GM12878 (cell line): ENCODE measurements at regions of chr1 and their contacts with region 1.

Region 1: GRCh38 chr1:99808391-99809115 is 41.6 kb upstream of the AGL start:
- DNase-seq: peak; percentile 79
- ATAC-seq: peak; percentile 96
- H3K4me3 ChIP-seq: no peak overlapping the region
- H3K27ac ChIP-seq: peak overlapping the region; percentile 67
- H3K4me1 ChIP-seq: peaks cover 10% of the 10 kb centered on the region
- H3K27me3 ChIP-seq: no peaks in the 10 kb centered on the region
- CTCF ChIP-seq: peak; percentile 24 to 72 (median 55); a peak in 5 of 6 replicates
- EP300 ChIP-seq: no peak
- POLR2A ChIP-seq: no peak
- RAD21 ChIP-seq: peak; percentile 85

Region 2: DNA sequence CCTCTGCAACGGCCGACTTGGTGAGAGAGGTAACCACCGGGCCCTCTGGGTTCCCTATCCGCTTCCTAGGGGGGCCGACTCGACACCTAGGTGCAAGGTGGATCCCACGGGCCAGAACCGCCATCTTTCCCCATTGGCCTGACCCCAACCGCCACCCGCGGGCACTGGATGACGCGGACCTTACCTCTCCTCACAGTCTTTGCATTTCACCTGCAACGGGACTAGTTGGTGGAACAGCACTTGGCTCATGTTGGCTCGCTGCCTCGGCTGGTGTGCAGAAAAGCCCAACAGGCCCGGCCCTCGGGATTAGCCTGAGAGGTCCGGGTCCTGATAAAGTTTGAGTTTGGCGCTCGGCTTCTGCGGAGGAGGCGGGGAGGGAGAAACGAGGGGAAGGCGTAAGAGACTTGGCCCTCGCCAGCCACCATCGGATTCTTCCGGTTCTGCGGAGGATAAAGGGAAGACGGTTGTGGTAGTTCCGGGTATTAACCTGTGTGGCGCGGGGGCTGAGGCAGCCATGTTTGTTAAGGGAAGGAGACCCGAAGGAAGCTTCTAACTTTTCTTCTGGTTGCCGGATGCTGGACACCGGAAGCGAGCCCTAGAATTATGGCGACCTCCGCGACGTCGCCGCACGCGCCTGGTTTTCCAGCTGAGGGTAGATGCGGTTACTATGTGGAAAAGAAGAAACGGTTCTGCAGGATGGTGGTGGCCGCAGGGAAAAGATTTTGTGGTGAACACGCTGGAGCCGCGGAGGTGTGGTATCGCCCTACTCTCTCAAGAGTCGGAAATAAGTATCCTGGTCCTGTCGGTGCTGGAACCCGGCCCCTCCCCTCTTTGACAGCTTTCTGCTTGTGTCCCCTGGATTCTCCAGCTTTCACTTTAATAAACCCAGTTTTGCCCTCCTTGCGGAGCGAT is 324.3 kb after region 1 on chr1 and contains the starts of genes SASS6 and TRMT13:
- CTCF ChIA-PET with region 1: interaction called, 3 read pairs
- POLR2A ChIA-PET with region 1: no interaction called
- RAD21 ChIA-PET with region 1: interaction called, 4 read pairs
- SMC1A ChIA-PET with region 1: interaction called, 4 read pairs
- in situ Hi-C with region 1: no loop called
- intact Hi-C with region 1: loop called (anchors 2 kb)
- DNase-seq: peak; percentile 90
- ATAC-seq: peak; percentile 91
- H3K4me3 ChIP-seq: peak within 1 kb of the TSS; percentile 99
- H3K27ac ChIP-seq: peak within 1 kb of the TSS; percentile 83
- H3K4me1 ChIP-seq: peaks cover 11% of the 10 kb centered on the region
- H3K27me3 ChIP-seq: no peaks in the 10 kb centered on the region
- CTCF ChIP-seq: no peak
- EP300 ChIP-seq: peak in 1 of 2 experiments; percentile 43; a peak in 1 of 4 replicates
- POLR2A ChIP-seq: peak; percentile 80
- RAD21 ChIP-seq: no peak
- polyA plus RNA-seq, gene SASS6: 8.2 to 10.7 TPM
- polyA plus RNA-seq, gene TRMT13: 17.1 to 22.3 TPM

Region 3: GRCh38 chr1:100239961-100240360 is 431.4 kb after region 1 on chr1:
- CTCF ChIA-PET with region 1: no interaction called
- POLR2A ChIA-PET with region 1: no interaction called
- RAD21 ChIA-PET with region 1: no interaction called
- SMC1A ChIA-PET with region 1: no interaction called
- in situ Hi-C with region 1: no loop called
- intact Hi-C with region 1: no loop called
- DNase-seq: no peak
- ATAC-seq: no peak
- H3K4me3 ChIP-seq: no peak overlapping the region
- H3K27ac ChIP-seq: no peak overlapping the region
- H3K4me1 ChIP-seq: no peaks in the 10 kb centered on the region
- H3K27me3 ChIP-seq: no peaks in the 10 kb centered on the region
- CTCF ChIP-seq: no peak
- EP300 ChIP-seq: no peak
- POLR2A ChIP-seq: no peak
- RAD21 ChIP-seq: no peak

Region 4: DNA sequence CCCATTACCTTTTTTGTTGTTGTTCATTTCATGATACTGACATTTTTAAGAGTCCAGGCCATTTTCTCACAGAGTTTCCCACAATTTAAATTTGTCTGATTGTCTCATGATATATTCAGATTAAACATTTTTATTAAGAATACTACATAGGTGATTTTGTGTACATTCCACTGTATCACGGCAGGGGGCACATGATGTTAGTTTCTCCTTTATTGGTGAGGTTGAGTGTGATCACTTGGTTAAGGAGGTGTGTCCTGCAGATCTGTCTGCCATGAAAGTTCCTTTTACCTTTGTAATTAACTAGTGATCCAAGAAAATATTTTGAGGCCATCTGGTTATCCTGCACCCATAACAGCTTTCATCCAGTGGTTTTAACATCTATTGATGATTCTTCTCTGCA is 469.3 kb after region 1 on chr1:
- CTCF ChIA-PET with region 1: no interaction called
- POLR2A ChIA-PET with region 1: no interaction called
- RAD21 ChIA-PET with region 1: interaction called, 3 read pairs
- SMC1A ChIA-PET with region 1: no interaction called
- in situ Hi-C with region 1: no loop called
- intact Hi-C with region 1: loop called (anchors 10 kb)
- DNase-seq: no peak
- ATAC-seq: peak; percentile 88
- H3K4me3 ChIP-seq: no peak overlapping the region
- H3K27ac ChIP-seq: no peak overlapping the region
- H3K4me1 ChIP-seq: no peaks in the 10 kb centered on the region
- H3K27me3 ChIP-seq: no peaks in the 10 kb centered on the region
- CTCF ChIP-seq: peak; percentile 25 to 28 (median 26); a peak in 2 of 6 replicates
- EP300 ChIP-seq: no peak
- POLR2A ChIP-seq: no peak
- RAD21 ChIP-seq: peak; percentile 46

Region 5: GRCh38 chr1:100530880-100531487 is 722.4 kb after region 1 on chr1:
- CTCF ChIA-PET with region 1: no interaction called
- POLR2A ChIA-PET with region 1: no interaction called
- RAD21 ChIA-PET with region 1: no interaction called
- SMC1A ChIA-PET with region 1: no interaction called
- in situ Hi-C with region 1: no loop called
- intact Hi-C with region 1: loop called (anchors 10 kb)
- DNase-seq: peak; percentile 40
- ATAC-seq: peak; percentile 94
- H3K4me3 ChIP-seq: no peak overlapping the region
- H3K27ac ChIP-seq: no peak overlapping the region
- H3K4me1 ChIP-seq: peaks cover 22% of the 10 kb centered on the region; the same call in 1 of the 2 replicates
- H3K27me3 ChIP-seq: no peaks in the 10 kb centered on the region
- CTCF ChIP-seq: no peak
- EP300 ChIP-seq: no peak
- POLR2A ChIP-seq: no peak
- RAD21 ChIP-seq: no peak